ENCODE measurements at regions of chr19 and their contacts with region 1.

Region 1: DNA sequence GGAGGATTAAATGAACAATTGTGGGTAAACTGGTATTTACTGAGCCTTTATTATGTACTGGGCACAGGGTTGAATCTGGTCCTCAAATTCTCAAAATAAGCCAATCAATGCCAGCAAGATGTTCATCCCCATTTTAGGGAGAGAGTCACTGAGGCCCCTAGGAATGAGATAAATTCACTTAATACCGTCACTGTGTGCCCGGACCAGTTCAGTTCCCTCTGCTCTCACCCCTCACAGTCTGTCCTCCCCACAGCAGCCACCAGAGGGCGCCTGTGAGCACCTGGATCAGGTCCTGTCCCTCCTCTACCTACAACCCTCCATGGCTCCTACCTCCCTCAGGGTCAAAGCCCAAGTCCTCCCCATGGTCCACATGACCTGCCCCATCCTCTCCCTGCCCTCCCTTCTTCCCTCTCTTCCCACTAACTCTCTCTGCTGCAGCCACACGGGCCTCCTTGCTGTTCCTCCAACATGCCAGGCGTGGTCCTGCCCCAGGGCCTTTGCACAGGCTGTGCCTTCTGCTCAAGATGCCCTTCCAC is 42.0 kb upstream of the NFIC start:
- DNase-seq: peak; percentile 75
- H3K4me3 Mint-ChIP-seq: no peak overlapping the region
- H3K27ac Mint-ChIP-seq: no peak overlapping the region
- H3K4me1 Mint-ChIP-seq: peaks cover 7% of the 10 kb centered on the region
- H3K27me3 Mint-ChIP-seq: peaks cover 42% of the 10 kb centered on the region
- CTCF ChIP-seq: peak; percentile 53

Region 2: GRCh38 chr19:3429581-3430080 is 105.2 kb after region 1 on chr19:
- CTCF ChIA-PET with region 1: interaction called, 11 read pairs
- intact Hi-C with region 1: loop called (anchors 2 kb)
- DNase-seq: peak; percentile 82
- H3K4me3 Mint-ChIP-seq: no peak overlapping the region
- H3K27ac Mint-ChIP-seq: no peak overlapping the region
- H3K4me1 Mint-ChIP-seq: no peaks in the 10 kb centered on the region
- H3K27me3 Mint-ChIP-seq: no peaks in the 10 kb centered on the region
- CTCF ChIP-seq: peak; percentile 90

Region 3: DNA sequence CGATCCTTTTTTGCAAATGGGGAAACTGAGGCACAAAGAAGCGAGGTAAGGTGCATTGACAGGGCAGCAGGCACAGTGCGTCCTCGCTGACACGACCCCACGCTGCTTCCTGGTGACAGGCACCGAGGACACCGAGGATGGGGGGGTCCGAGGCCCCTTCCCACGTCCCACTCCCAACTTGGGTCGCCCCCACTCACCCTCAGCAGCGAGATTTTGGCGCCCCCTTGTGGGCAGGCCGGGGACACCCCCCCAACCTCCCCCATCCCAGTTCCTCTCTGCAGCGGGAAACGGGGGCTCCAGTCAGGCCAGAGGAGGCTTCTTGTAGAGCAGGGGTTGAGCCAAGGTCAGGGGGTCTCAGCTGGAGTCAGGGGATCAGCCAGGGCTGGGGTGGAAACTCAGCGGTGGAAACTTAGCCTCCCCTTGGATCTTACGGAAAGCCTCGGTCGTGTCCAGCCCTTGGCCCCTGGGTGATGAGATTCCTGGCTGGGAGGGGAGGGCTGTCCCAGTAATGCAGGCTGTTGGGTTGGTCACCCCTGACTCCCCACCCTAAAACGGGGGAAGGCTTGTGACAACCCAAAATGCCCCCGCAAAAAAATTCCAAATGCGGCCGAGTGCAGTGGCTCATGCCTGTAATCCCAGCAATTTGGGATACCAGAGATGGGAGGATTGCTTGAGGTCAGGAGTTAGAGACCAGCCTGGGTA is 147.7 kb after region 1 on chr19:
- CTCF ChIA-PET with region 1: no interaction called
- intact Hi-C with region 1: loop called (anchors 1 kb)
- DNase-seq: peak; percentile 44
- H3K4me3 Mint-ChIP-seq: no peak overlapping the region
- H3K27ac Mint-ChIP-seq: no peak overlapping the region
- H3K4me1 Mint-ChIP-seq: no peaks in the 10 kb centered on the region
- H3K27me3 Mint-ChIP-seq: peaks cover 16% of the 10 kb centered on the region
- CTCF ChIP-seq: peak; percentile 57